WTC11 (cell line): ENCODE measurements at regions of chr3 and their contacts with region 1.

Region 1: DNA sequence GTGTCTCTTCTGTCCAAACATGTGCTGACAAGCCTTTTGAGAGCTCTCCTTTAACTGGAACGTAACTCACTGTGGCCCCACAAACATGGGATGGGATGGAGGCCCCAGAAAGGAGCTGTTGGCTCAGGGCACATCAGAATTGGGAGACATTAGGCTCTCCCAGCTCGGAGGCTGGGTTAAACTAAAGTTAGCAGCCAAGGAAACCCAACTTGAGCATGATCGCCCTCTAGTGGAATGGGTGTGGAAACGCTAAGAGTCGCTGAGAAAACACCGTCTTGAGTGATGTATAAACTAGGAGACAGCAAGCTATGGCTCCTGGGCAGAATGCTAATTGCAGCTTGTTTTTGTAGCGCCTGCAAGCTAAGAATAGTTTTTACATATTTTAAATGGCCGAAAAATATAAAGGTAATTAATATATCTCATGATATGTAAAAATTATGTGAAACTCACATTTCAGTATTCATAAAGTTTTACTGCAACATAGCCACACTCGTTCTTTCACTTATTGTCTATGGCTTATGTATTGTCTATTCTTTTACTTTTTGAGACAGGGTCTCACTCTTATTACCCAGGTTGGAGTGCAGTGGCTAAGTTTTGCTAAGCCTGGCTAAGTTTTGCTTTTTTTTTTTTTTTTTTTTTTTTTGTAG is 138.8 kb upstream of the HACD2 start:
- DNase-seq: peak; percentile 63
- ATAC-seq: peak; percentile 70
- H3K4me3 Mint-ChIP-seq: no peak overlapping the region
- H3K27ac Mint-ChIP-seq: peak overlapping the region; percentile 64; the same call in 1 of the 2 replicates
- H3K4me1 Mint-ChIP-seq: no peaks in the 10 kb centered on the region; the same call in none of the 2 replicates
- H3K27me3 Mint-ChIP-seq: no peaks in the 10 kb centered on the region; the same call in 1 of the 2 replicates
- CTCF ChIP-seq: peak; percentile 63

Region 2: GRCh38 chr3:123642182-123642956 is 81.3 kb before region 1 on chr3:
- CTCF ChIA-PET with region 1: interaction called, 60 read pairs
- POLR2A ChIA-PET with region 1: no interaction called
- DNase-seq: peak; percentile 92
- ATAC-seq: peak; percentile 99
- H3K4me3 Mint-ChIP-seq: no peak overlapping the region
- H3K27ac Mint-ChIP-seq: peak overlapping the region; percentile 84
- H3K4me1 Mint-ChIP-seq: peaks cover 33% of the 10 kb centered on the region
- H3K27me3 Mint-ChIP-seq: no peaks in the 10 kb centered on the region
- CTCF ChIP-seq: peak; percentile 90

Region 3: DNA sequence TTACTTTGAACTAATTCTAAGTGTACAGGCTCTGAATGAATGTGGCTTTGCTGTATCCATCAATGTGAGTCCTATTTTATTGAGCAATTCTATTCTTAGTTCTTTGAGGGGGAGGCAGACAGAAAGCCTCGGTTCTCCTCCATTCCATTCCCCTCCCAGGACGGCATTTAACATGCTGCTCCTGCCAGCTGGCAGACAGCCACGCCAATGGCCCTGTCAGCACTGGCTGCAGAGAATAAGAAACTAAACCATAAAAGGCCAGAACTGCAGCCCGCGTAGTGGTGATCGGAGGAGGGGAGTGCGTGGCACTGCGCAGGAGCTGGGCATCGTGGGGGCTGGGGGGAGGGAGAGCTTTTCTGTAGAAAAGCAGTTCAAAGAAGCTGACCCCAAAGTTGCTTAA is 62.7 kb before region 1 on chr3:
- CTCF ChIA-PET with region 1: interaction called, 141 read pairs
- POLR2A ChIA-PET with region 1: no interaction called
- DNase-seq: no peak
- ATAC-seq: no peak
- H3K4me3 Mint-ChIP-seq: no peak overlapping the region
- H3K27ac Mint-ChIP-seq: no peak overlapping the region
- H3K4me1 Mint-ChIP-seq: no peaks in the 10 kb centered on the region
- H3K27me3 Mint-ChIP-seq: no peaks in the 10 kb centered on the region; the same call in none of the 2 replicates
- CTCF ChIP-seq: no peak

Region 4: DNA sequence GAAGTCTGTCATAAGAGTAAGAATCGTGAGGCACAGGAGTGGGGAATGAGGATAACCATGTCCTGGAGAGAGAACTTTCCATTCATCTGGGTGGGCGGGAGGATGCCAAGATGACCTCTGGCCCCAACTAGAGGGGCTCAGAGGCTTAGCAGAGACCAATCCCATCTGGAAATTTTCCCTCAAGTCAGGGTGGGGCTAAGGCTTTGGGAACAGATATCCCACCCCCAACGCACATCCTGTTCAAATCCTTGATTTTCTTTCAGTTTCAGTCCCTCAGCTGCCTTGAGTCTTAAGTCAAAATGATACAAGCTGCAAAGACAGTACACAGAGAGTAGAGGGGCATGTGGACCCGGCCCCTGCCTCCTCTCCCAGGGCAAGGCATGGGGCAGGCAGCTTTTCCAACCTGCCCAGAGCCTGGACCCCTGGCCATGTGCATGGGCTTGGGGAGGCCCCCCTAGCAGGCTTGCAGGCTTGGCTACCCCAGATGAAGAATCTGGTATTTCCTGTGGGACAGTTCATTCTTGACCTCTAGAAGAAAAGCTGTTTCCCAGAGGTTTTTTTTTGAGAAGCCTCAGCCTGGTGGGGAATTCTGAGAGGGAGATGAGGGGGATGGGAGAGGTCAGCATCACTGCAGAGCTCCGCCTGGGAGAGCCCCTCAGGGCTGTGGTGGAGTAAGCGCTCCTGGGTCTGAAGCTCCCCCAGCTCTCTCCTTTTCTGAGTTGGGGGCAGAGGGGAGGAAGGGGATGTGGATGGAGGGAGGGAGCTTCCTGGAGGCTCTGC is 29.1 kb before region 1 on chr3:
- CTCF ChIA-PET with region 1: interaction called, 29 read pairs
- POLR2A ChIA-PET with region 1: no interaction called
- DNase-seq: no peak
- ATAC-seq: peak; percentile 20
- H3K4me3 Mint-ChIP-seq: no peak overlapping the region
- H3K27ac Mint-ChIP-seq: no peak overlapping the region
- H3K4me1 Mint-ChIP-seq: peaks cover 27% of the 10 kb centered on the region
- H3K27me3 Mint-ChIP-seq: no peaks in the 10 kb centered on the region
- CTCF ChIP-seq: no peak

Region 5: GRCh38 chr3:123712077-123712860 is 11.4 kb before region 1 on chr3:
- CTCF ChIA-PET with region 1: interaction called, 29 read pairs
- POLR2A ChIA-PET with region 1: no interaction called
- DNase-seq: peak; percentile 23
- ATAC-seq: peak; percentile 78
- H3K4me3 Mint-ChIP-seq: no peak overlapping the region; the same call in 1 of the 2 replicates
- H3K27ac Mint-ChIP-seq: peak overlapping the region; percentile 21; the same call in 1 of the 2 replicates
- H3K4me1 Mint-ChIP-seq: peaks cover 15% of the 10 kb centered on the region
- H3K27me3 Mint-ChIP-seq: no peaks in the 10 kb centered on the region
- CTCF ChIP-seq: no peak

Region 6: DNA sequence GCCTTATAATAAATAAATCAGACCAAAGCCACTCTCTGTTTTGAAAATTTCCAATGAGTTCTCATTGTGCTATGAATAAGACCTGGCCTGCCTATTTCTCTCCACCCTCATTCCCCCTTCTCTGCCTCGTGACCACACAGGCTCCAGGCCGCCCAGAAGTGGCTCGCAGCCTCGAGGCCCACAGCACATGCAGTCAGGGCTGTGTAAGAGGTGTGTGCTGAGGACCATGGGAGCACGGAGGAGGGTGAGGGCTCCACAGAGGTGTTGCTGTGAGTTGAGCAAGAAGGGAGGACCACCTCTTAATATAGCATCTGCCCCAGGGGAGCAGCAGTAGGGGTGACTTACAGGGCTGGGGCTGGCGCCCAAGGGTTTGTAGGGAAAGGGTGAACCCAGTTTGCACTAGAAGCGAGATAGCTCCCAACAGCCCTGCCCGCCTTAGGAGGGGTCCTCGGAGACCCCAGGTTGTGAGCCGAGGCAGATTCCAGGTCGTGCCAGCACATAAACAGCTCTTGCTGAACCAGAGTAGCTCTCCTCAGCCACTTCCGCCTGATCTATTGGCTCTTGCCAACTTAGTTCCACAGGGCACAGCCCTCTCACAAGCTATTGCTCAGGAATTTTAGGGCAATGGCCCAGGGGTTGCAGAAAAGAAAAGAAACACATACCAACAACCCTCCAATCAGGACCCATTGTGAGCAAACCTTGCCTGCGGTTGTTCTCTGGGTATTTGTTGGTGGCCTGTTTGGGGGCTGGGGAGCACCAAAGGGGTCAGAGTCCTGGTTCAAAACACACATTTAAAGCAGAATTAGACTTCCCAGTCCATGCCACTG is 42.8 kb after region 1 on chr3:
- CTCF ChIA-PET with region 1: interaction called, 13 read pairs
- POLR2A ChIA-PET with region 1: interaction called, 4 read pairs
- DNase-seq: no peak
- ATAC-seq: peak; percentile 87
- H3K4me3 Mint-ChIP-seq: no peak overlapping the region
- H3K27ac Mint-ChIP-seq: no peak overlapping the region
- H3K4me1 Mint-ChIP-seq: peaks cover 14% of the 10 kb centered on the region
- H3K27me3 Mint-ChIP-seq: no peaks in the 10 kb centered on the region
- CTCF ChIP-seq: no peak

Region 7: GRCh38 chr3:123871946-123872345 is 148.3 kb after region 1 on chr3:
- CTCF ChIA-PET with region 1: interaction called, 12 read pairs
- POLR2A ChIA-PET with region 1: no interaction called
- DNase-seq: no peak
- ATAC-seq: 0 out of 2 replicates have a peak, but pooled peaks have one; percentile 26
- H3K4me3 Mint-ChIP-seq: no peak overlapping the region
- H3K27ac Mint-ChIP-seq: no peak overlapping the region
- H3K4me1 Mint-ChIP-seq: peaks cover 24% of the 10 kb centered on the region
- H3K27me3 Mint-ChIP-seq: no peaks in the 10 kb centered on the region
- CTCF ChIP-seq: no peak

Region 8: DNA sequence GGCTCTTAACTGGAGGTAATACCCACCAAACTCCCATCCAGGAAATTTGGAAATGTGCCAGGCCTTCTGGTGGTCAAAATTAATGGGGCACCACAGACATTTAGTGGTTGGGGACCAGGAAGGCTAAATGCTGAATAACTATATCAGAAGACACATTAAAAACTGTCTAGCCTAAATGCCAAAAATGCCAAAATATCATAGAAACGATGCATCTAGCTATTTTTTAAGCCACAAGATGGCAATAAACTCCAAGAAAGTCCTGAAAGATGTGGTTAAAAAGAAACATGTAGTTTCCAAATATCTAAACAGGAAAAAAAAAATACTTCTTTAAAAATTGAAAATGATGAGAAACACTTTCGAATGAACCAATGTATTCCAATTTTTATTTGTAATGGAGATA is 217.5 kb after region 1 on chr3:
- CTCF ChIA-PET with region 1: no interaction called
- POLR2A ChIA-PET with region 1: no interaction called
- DNase-seq: no peak
- ATAC-seq: no peak
- H3K4me3 Mint-ChIP-seq: no peak overlapping the region
- H3K27ac Mint-ChIP-seq: no peak overlapping the region
- H3K4me1 Mint-ChIP-seq: no peaks in the 10 kb centered on the region
- H3K27me3 Mint-ChIP-seq: no peaks in the 10 kb centered on the region
- CTCF ChIP-seq: no peak

Region 9: GRCh38 chr3:124014366-124014942 is 290.8 kb after region 1 on chr3:
- CTCF ChIA-PET with region 1: no interaction called
- POLR2A ChIA-PET with region 1: no interaction called
- DNase-seq: no peak
- ATAC-seq: no peak
- H3K4me3 Mint-ChIP-seq: no peak overlapping the region
- H3K27ac Mint-ChIP-seq: no peak overlapping the region
- H3K4me1 Mint-ChIP-seq: peaks cover 3% of the 10 kb centered on the region; the same call in 1 of the 2 replicates
- H3K27me3 Mint-ChIP-seq: peaks cover 5% of the 10 kb centered on the region; the same call in 1 of the 2 replicates
- CTCF ChIP-seq: no peak